Sciatic nerve (tissue), 2 donors: ENCODE measurements at regions of chr12 and their contacts with region 1.

Region 1: GRCh38 chr12:39499296-39499695 is 56.4 kb upstream of the KIF21A start:
- DNase-seq: no peak
- ATAC-seq: no peak

Region 2: DNA sequence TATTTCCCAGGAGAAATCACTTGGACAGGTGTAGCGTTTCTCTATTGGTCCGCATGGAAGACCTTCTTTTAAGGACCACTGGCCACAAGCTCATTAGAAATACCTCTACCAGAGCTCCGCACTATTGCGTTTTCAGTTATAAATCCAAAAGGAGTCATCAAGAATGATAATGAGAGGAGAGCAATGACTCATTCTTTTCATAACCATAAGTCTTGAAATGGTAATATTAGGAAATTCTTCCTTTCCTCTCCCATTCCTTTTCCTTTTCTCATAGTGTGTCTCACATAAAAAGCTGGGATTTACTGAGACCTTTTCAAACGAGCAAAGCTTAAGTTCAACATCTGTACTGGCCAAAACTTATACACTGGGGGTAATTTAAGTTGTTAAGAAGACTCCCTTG is 809.6 kb before region 1 on chr12:
- intact Hi-C with region 1: loop called (anchors 5 kb)
- DNase-seq: no peak
- ATAC-seq: no peak

Region 3: GRCh38 chr12:39426636-39427245 is 72.6 kb before region 1 on chr12:
- intact Hi-C with region 1: no loop called
- DNase-seq: no peak
- ATAC-seq: no peak